ENCODE measurements at regions of chr17 and their contacts with region 1.

Region 1: DNA sequence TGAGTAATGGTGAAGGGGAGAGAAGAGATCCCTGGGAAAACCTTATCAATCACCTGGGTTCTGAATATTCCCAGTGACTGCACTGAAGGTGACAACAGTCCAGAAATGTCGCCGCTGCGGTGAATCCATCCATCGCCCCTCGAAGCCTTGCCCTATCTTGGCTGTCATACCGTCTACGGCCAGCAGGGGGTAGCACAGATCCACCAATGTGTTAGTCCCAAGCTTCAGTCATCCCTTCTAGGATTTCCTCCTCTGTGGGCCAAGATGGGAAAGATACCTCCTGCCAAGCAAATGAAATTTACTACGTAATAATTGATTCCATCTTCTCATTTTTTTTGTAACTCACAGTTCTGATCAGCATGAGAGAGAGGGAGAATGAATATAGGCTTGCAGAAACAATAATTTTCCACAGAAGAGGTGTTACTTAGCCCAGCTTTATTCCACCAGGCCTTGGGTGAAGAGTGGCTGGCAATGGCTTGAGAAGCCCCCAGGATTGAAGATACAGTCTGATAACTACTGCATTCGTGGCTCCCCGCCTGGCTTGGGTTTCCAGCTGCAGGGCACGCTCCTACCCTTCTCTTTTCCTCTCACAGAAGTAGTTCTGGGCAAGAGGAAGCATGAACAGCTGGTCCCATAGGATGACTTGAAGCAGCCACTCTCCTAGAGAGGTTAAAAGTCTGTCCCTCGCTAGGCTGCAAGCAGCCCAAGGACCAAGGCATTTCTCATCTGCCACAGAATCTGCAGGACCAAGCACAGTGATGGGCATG is 2.6 kb upstream of the FMNL1 start:
- DNase-seq: peak; percentile 91
- H3K4me3 Mint-ChIP-seq: peak overlapping the region; percentile 86
- H3K27ac Mint-ChIP-seq: peak overlapping the region; percentile 85
- H3K4me1 Mint-ChIP-seq: peaks cover 33% of the 10 kb centered on the region
- H3K27me3 Mint-ChIP-seq: no peaks in the 10 kb centered on the region

Region 2: DNA sequence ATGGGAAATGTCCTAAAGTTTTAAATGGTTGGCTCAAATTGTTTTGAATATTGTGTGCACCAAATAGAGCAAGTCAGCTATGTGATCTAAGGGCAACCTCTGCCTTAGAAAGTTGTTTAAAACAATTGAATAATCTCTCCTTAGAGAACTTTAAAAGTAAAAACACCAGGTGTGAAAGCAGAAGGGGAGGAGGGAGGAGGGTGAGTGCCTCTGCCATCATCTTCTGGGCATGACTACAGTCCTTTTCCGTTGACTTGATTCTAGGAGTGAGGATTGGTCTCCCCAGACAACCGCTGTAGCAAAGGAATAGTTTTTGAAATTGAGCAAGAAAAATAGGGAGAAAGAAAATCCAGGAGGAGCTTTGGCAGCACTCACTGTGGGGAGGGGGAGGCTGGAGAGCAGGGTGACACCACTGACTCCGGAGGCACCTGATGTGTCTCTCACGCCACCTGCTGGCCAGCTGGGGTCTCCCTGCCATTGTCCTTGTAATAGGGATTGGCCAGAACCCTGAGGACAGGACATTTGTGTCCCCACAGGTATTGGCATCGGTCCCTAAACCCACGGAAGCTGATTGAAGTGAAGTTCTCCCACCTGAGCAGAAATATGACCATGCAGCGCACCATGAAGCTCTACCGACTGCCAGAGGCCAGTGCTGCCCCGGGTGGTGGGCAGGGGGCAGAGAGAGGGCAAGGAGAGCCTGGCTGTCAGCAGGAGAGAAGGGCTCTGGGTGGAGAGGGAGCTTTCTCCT is 120.0 kb before region 1 on chr17:
- CTCF ChIA-PET with region 1: no interaction called
- DNase-seq: peak; percentile 86
- H3K4me3 Mint-ChIP-seq: no peak overlapping the region
- H3K27ac Mint-ChIP-seq: no peak overlapping the region
- H3K4me1 Mint-ChIP-seq: no peaks in the 10 kb centered on the region
- H3K27me3 Mint-ChIP-seq: no peaks in the 10 kb centered on the region

Region 3: DNA sequence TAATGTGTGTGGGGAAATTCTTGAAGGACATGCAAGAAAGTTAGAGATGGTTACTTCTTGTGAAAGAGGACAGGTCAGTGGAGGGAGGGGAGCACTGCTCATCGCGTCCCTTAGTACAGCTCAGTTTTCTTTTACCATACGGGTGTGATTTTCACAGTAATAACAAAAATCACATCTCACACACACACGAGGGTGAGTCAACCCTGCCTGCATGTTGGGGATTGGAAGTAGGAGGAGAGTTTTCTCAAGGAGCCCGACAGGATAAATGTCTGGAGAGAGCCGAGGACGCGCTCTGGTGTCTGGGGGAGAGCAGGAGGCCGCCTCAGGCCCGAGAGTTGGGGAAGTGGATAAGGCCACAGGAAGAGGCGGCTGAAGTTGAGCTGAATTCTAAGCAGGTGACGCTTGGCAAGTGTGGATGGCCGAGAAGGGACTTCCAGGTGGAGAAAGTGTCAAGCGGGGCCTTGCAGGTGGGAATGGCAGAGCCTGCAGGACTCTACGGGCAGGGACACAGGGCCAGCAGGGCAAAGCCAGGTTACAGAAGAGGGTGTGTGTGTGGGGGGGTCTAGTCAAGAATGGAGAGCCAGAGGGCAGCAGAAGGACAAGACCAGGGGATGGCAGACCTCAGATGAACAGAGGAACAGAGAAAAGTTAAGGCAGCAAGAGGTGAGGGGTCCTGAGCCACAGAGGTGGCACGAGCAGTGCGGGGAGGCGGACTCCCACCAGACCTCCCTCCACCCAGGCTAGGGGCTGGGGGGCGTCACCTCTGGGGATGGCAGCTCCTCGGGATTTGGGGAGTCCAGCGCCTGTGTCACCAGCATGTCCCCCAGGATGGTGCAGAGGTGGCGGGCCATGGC is 103.0 kb before region 1 on chr17:
- CTCF ChIA-PET with region 1: no interaction called
- DNase-seq: no peak
- H3K4me3 Mint-ChIP-seq: no peak overlapping the region
- H3K27ac Mint-ChIP-seq: no peak overlapping the region
- H3K4me1 Mint-ChIP-seq: no peaks in the 10 kb centered on the region
- H3K27me3 Mint-ChIP-seq: peaks cover 40% of the 10 kb centered on the region

Region 4: DNA sequence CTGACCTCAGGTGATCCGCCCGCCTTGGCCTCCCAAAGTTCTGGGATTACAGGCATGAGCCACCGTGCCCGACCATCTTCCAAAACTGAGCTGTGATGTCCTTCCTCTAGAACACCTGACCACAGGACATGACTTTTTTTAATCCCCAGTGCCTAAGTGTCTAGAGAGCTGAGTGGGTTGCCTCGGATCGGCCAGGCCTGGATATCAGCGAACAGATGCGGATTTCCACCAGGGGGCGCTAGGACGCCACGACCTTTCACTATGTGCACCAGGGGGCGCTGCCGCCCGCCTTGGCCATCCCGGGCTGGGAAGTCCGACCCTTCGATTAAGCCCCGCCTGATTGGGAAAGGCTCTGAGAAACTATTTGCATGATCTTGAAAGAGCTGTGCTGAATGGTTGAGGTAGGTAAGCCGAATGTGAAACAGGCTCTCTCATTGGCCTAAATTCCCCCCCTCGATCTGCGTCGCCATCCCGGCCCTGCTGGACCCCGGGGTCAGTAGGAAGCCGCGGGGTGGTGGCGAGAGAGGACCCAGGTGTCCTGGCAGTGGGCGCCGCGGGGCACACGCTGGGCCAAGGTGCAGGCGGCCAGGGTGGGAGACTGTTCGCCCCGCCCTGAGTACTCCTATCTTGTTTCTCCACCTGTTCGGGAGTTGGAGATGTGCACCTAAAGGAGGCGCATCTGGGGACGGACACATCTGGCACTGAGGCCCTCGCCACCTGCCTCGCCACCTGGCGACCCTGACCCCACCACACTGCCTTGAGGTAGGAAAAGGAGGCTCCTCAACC is 83.7 kb before region 1 on chr17 and contains the start of gene ACBD4:
- CTCF ChIA-PET with region 1: interaction called, 10 read pairs
- DNase-seq: peak; percentile 97
- H3K4me3 Mint-ChIP-seq: peak within 1 kb of the TSS; percentile 91
- H3K27ac Mint-ChIP-seq: peak within 1 kb of the TSS; percentile 74
- H3K4me1 Mint-ChIP-seq: peaks cover 23% of the 10 kb centered on the region
- H3K27me3 Mint-ChIP-seq: peaks cover 16% of the 10 kb centered on the region

Region 5: GRCh38 chr17:45235416-45236281 is 16.6 kb after region 1 on chr17:
- CTCF ChIA-PET with region 1: interaction called, 276 read pairs
- DNase-seq: peak; percentile 86
- H3K4me3 Mint-ChIP-seq: no peak overlapping the region
- H3K27ac Mint-ChIP-seq: peak overlapping the region; percentile 84
- H3K4me1 Mint-ChIP-seq: peaks cover 52% of the 10 kb centered on the region
- H3K27me3 Mint-ChIP-seq: no peaks in the 10 kb centered on the region

Region 6: GRCh38 chr17:45247429-45248131 is 28.5 kb after region 1 on chr17:
- CTCF ChIA-PET with region 1: interaction called, 30 read pairs
- DNase-seq: peak; percentile 99
- H3K4me3 Mint-ChIP-seq: peak overlapping the region; percentile 87
- H3K27ac Mint-ChIP-seq: peak overlapping the region; percentile 93
- H3K4me1 Mint-ChIP-seq: peaks cover 68% of the 10 kb centered on the region
- H3K27me3 Mint-ChIP-seq: peaks cover 5% of the 10 kb centered on the region

Region 7: GRCh38 chr17:45270828-45271418 is 51.8 kb after region 1 on chr17:
- CTCF ChIA-PET with region 1: interaction called, 41 read pairs
- DNase-seq: peak; percentile 71
- H3K4me3 Mint-ChIP-seq: no peak overlapping the region
- H3K27ac Mint-ChIP-seq: peak overlapping the region; percentile 37
- H3K4me1 Mint-ChIP-seq: no peaks in the 10 kb centered on the region
- H3K27me3 Mint-ChIP-seq: no peaks in the 10 kb centered on the region

Region 8: GRCh38 chr17:45307290-45308015 is 88.4 kb after region 1 on chr17:
- CTCF ChIA-PET with region 1: interaction called, 11 read pairs
- DNase-seq: peak; percentile 47
- H3K4me3 Mint-ChIP-seq: no peak overlapping the region
- H3K27ac Mint-ChIP-seq: peak overlapping the region; percentile 90
- H3K4me1 Mint-ChIP-seq: peaks cover 83% of the 10 kb centered on the region
- H3K27me3 Mint-ChIP-seq: no peaks in the 10 kb centered on the region

Measured in activated naive CD4-positive, alpha-beta T cell treated with anti-CD3 and anti-CD28 coated beads, Interleukin-2, amount 10 ng/mL, durations not matched to agents 7 days and 5 days (primary cell).